WTC11 (cell line): ENCODE measurements at regions of chr9 and their contacts with region 1.

Region 1: GRCh38 chr9:86202338-86202882 is 57.0 kb downstream of the C9orf153 start:
- DNase-seq: peak; percentile 19
- ATAC-seq: peak; percentile 88
- H3K4me3 Mint-ChIP-seq: no peak overlapping the region
- H3K27ac Mint-ChIP-seq: no peak overlapping the region
- H3K4me1 Mint-ChIP-seq: 0 out of 2 replicates have a peak, but pooled peaks cover 3% of the 10 kb centered on the region
- H3K27me3 Mint-ChIP-seq: no peaks in the 10 kb centered on the region
- CTCF ChIP-seq: peak; percentile 69

Region 2: DNA sequence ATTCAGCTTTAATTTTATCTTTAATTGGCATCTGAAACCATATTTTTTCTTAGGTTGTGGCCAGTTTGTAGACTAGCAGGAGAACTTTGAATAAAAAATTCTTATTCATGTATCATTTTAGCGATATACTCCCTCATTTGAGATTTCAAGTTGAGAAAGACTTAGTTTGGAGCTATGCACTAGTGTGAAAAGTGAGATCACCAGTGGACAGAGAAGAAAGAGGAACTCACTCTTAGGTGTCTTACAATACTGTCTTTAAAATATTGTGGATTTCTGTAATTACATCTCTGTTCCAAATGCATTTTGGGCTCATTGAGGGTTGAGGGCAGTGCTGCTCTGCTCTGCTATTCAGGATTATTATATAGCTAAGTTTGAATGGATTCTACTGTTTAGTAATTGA is 206.8 kb before region 1 on chr9:
- CTCF ChIA-PET with region 1: no interaction called
- POLR2A ChIA-PET with region 1: no interaction called
- DNase-seq: no peak
- ATAC-seq: no peak
- H3K4me3 Mint-ChIP-seq: no peak overlapping the region
- H3K27ac Mint-ChIP-seq: no peak overlapping the region
- H3K4me1 Mint-ChIP-seq: no peaks in the 10 kb centered on the region
- H3K27me3 Mint-ChIP-seq: no peaks in the 10 kb centered on the region
- CTCF ChIP-seq: no peak

Region 3: DNA sequence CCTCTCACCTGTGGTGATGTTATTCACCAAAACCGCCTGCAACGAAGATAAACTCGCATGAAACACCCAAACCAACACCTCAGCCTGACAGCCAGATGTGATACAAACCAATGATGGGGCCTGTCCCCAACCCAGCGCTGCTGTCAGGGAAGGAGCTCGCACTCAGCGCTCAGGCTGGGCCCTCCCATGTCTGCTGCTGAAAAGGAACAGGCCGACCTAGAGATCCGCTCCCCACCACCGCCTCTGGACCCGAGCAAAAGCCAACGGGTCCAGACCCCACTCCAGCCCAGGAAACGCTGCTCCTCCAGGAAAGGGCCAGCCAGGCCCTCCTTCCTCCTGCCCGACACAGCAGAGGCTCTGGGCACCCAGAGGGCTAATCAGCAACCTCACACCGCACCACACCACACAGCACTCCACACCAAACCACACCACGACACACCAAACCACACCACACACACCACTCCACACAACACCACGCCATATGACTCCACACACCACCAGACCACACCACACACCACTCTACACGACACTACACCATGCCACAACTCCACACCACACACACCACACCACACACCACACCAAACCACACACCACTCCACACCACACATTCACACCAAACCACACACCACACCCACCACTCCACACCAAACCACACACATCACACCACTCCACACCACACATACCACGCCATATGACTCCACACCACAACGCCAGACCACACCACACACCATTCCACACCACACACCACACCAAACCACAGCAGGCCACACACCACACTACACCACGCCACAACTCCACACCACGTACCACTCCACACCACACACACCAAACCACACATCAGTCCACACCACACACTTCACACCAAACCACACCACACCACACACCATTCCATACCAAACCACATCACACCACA is 149.6 kb before region 1 on chr9:
- CTCF ChIA-PET with region 1: no interaction called
- POLR2A ChIA-PET with region 1: no interaction called
- DNase-seq: no peak
- ATAC-seq: peak; percentile 56
- H3K4me3 Mint-ChIP-seq: no peak overlapping the region
- H3K27ac Mint-ChIP-seq: no peak overlapping the region; the same call in 1 of the 2 replicates
- H3K4me1 Mint-ChIP-seq: no peaks in the 10 kb centered on the region
- H3K27me3 Mint-ChIP-seq: no peaks in the 10 kb centered on the region
- CTCF ChIP-seq: no peak

Region 4: DNA sequence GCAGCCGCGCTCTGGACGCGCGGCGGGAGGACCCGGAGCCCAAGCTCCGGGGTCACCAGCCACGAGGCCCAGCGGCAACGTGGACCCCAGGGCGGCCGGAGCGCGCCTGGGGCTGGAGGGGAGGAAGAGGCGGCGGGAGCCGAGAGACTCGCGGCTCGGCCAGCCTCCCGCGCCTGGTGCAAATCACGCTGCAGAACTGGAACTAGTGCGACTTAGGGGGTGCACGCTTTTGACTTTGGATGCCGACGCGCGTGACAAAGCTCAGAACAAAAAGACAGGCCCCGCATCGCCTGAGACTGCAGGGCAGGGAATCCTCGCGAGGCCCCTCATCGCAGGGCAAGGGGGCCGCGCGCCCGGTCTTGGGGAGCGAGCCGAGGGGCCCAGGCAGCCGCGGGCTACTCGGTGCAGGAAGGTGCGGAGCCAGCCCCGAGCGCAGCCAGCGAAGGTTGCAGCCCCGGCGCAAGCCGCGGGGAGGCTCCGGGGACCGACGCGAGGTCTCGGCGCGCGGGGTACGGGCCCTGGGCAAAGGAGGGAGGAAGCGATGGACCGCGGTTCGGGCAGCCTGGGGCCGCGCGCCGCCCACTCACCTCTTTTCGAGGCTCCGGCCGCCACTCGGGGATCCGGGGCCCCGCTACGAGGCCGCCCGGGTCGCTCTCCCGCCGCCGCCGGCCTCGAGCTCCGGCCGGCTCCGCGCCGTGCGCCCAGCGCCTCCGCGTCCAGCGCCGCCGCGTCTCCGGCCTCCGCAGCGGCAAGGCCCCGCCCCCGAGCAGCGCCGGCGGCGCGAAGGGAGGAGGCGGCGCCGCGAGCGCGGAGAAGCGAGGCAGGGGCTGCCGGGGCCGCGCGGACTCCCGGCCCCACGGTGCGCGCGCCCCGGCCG is 103.3 kb before region 1 on chr9 and contains the start of gene GOLM1:
- CTCF ChIA-PET with region 1: interaction called, 10 read pairs
- POLR2A ChIA-PET with region 1: no interaction called
- DNase-seq: peak; percentile 55
- ATAC-seq: peak; percentile 80
- H3K4me3 Mint-ChIP-seq: peak within 1 kb of the TSS; percentile 88
- H3K27ac Mint-ChIP-seq: no peak within 1 kb of the TSS
- H3K4me1 Mint-ChIP-seq: peaks cover 43% of the 10 kb centered on the region
- H3K27me3 Mint-ChIP-seq: peaks cover 30% of the 10 kb centered on the region
- CTCF ChIP-seq: no peak
- total RNA-seq, gene GOLM1: 75.1 to 81.8 TPM (median 77.3 TPM) in 3 replicates

Region 5: DNA sequence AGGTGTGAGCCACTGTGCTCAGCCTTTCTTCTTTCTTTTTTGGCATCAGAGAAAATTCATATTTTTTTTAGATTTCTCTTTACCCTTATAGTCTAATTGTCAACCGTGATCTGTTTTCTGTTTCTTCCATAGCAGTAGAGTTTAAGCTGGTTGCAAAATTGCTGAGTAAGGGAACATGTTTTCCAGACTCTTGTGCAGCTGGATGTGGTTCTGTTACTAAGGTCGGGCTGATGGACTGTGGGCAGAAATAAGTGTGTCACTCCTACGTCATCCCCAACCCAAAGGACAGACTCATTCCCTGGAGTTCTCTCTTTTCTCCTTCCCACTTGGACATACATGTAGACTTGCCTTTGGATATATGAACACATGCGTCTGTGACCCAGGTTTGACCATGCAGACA is 38.9 kb before region 1 on chr9:
- CTCF ChIA-PET with region 1: no interaction called
- POLR2A ChIA-PET with region 1: no interaction called
- DNase-seq: no peak
- ATAC-seq: no peak
- H3K4me3 Mint-ChIP-seq: no peak overlapping the region
- H3K27ac Mint-ChIP-seq: no peak overlapping the region
- H3K4me1 Mint-ChIP-seq: no peaks in the 10 kb centered on the region
- H3K27me3 Mint-ChIP-seq: no peaks in the 10 kb centered on the region
- CTCF ChIP-seq: no peak

Region 6: GRCh38 chr9:86181379-86182315 is 20.8 kb before region 1 on chr9:
- CTCF ChIA-PET with region 1: interaction called, 21 read pairs
- POLR2A ChIA-PET with region 1: no interaction called
- DNase-seq: no peak
- ATAC-seq: peak; percentile 68
- H3K4me3 Mint-ChIP-seq: peak overlapping the region; percentile 34
- H3K27ac Mint-ChIP-seq: peak overlapping the region; percentile 80
- H3K4me1 Mint-ChIP-seq: peaks cover 48% of the 10 kb centered on the region
- H3K27me3 Mint-ChIP-seq: peaks cover 4% of the 10 kb centered on the region
- CTCF ChIP-seq: no peak

Region 7: DNA sequence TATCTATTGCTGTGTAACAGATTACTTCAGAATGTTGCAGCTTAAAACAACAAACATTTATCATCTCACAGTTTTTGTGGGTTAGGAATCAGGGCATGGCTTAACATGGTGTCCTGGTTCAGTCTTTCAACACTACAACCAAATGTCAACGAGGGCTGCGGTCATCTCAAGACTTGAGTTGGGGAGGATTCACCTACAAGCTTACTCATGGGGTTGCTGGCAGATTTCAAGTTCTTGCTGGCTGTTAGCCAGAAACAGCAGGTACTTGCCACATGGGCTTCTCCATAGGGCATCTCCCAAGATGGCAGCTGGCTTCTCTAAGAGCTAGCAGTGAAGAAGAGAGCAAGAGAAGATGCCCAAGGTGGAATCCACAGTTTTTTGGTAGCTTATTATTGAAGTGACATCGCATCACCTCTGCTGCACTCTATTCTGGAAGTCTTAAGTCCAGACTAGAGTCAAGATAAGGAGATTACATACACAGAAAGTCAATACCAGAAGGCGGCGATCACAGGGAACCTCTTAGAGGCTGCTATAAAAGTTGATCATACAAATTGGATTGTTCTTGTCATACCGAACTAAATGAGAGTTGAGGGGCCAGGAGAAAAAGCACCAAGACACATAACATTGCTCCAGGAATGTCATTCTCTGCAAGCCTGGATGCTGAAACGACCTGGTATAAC is 14.8 kb after region 1 on chr9:
- CTCF ChIA-PET with region 1: interaction called, 12 read pairs
- POLR2A ChIA-PET with region 1: no interaction called
- DNase-seq: no peak
- ATAC-seq: no peak
- H3K4me3 Mint-ChIP-seq: no peak overlapping the region
- H3K27ac Mint-ChIP-seq: no peak overlapping the region
- H3K4me1 Mint-ChIP-seq: no peaks in the 10 kb centered on the region
- H3K27me3 Mint-ChIP-seq: no peaks in the 10 kb centered on the region
- CTCF ChIP-seq: no peak

Region 8: DNA sequence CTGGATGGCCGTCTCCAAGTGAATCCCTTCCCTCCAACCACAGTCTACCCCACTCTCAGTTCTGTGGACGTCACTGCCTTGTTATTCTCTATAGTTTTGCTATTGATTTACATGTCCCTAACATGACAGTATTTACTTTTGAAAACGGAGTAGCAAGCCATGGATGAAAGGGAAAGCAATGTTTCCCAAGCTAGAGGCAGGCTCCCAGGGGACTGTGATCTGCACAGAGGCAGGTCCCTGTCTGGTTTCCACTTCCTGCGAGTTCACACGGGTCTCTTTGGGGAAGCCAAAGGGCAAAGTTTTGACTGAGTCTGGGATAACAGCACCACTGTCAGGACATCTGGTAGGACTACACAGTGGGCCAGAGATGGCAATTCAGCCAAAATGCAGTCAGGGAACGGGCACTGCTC is 44.3 kb after region 1 on chr9:
- CTCF ChIA-PET with region 1: interaction called, 12 read pairs
- POLR2A ChIA-PET with region 1: no interaction called
- DNase-seq: peak; percentile 12
- ATAC-seq: peak; percentile 84
- H3K4me3 Mint-ChIP-seq: no peak overlapping the region
- H3K27ac Mint-ChIP-seq: no peak overlapping the region
- H3K4me1 Mint-ChIP-seq: peaks cover 9% of the 10 kb centered on the region
- H3K27me3 Mint-ChIP-seq: no peaks in the 10 kb centered on the region
- CTCF ChIP-seq: no peak

Region 9: DNA sequence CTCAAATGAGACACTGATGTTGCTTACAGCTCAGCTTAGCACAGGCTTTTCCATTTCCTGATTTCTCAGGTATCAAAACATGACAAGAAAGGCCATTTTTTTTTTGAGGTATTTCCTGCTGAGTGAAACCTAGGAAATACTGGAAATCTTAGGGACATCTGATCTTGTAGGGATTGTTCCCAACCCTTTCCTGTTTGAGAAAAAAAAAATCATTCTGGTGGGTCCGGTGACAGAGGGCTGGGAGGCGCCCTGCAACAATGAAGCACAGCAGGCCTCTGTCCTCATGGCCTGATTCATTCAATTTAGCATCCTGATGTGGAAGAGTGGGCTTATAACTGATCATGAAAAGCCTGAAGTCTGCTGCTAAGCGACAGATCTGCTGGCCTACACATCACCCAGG is 60.0 kb after region 1 on chr9:
- CTCF ChIA-PET with region 1: interaction called, 24 read pairs
- POLR2A ChIA-PET with region 1: no interaction called
- DNase-seq: no peak
- ATAC-seq: no peak; the same call in 1 of the 2 replicates
- H3K4me3 Mint-ChIP-seq: no peak overlapping the region
- H3K27ac Mint-ChIP-seq: no peak overlapping the region
- H3K4me1 Mint-ChIP-seq: 0 out of 2 replicates have a peak, but pooled peaks cover 4% of the 10 kb centered on the region
- H3K27me3 Mint-ChIP-seq: no peaks in the 10 kb centered on the region
- CTCF ChIP-seq: no peak

Region 10: DNA sequence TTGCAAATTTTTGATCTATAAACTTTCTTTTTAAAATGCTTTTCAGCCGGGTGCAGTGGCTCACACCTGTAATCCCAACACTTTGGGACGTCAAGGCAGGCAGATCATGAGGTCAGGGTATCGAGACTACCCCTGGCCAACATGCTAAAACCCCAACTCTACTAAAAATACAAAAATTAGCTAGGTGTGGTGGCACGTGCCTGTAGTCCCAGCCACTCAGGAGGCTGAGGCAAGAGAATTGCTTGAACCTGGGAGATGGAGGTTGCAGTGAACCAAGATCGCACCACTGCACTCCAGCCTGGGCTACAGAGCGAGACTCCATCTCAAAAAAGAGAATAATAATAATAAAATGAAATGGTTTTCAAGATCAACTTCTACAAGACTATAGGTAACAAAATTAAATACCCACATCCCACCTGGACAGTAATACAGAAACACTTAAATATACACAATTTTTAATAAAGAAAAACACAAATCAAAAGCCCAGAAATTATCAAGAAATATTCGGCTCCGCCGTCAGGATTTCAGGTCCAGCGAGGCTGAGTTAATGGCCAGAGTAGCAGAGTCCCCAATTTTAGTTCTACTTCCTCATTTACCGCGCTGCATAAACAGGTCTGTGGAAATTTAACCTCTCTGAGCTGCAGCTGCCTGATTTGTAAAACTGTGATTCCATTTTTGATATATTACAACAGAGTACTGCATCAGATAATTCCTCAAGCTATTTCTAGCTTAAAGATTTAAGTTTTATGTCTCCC is 147.8 kb after region 1 on chr9:
- CTCF ChIA-PET with region 1: no interaction called
- POLR2A ChIA-PET with region 1: no interaction called
- DNase-seq: no peak
- ATAC-seq: no peak
- H3K4me3 Mint-ChIP-seq: no peak overlapping the region
- H3K27ac Mint-ChIP-seq: no peak overlapping the region
- H3K4me1 Mint-ChIP-seq: peaks cover 15% of the 10 kb centered on the region
- H3K27me3 Mint-ChIP-seq: peaks cover 5% of the 10 kb centered on the region
- CTCF ChIP-seq: no peak